ENCODE measurements at regions of chr17 and their contacts with region 1.

Region 1: GRCh38 chr17:31094600-31095238 is at the start of gene NF1:
- DNase-seq: peak; percentile 93
- H3K4me3 ChIP-seq: peak within 1 kb of the TSS; percentile 79 to 99 (median 88)
- H3K27ac ChIP-seq: peak within 1 kb of the TSS; percentile 71
- H3K4me1 ChIP-seq: peaks cover 10% of the 10 kb centered on the region
- H3K27me3 ChIP-seq: no peaks in the 10 kb centered on the region
- CTCF ChIP-seq: no peak
- POLR2A ChIP-seq: peak; percentile 25
- total RNA-seq, gene NF1: 37.6 and 42.4 TPM in 2 replicates

Region 2: GRCh38 chr17:30992551-30992950 is 102.2 kb before region 1 on chr17:
- CTCF ChIA-PET with region 1: no interaction called
- POLR2A ChIA-PET with region 1: no interaction called
- dilution Hi-C with region 1: no loop called
- intact Hi-C with region 1: no loop called
- DNase-seq: no peak
- H3K4me3 ChIP-seq: no peak overlapping the region
- H3K27ac ChIP-seq: no peak overlapping the region
- H3K4me1 ChIP-seq: no peaks in the 10 kb centered on the region
- H3K27me3 ChIP-seq: no peaks in the 10 kb centered on the region
- CTCF ChIP-seq: no peak
- POLR2A ChIP-seq: no peak

Region 3: DNA sequence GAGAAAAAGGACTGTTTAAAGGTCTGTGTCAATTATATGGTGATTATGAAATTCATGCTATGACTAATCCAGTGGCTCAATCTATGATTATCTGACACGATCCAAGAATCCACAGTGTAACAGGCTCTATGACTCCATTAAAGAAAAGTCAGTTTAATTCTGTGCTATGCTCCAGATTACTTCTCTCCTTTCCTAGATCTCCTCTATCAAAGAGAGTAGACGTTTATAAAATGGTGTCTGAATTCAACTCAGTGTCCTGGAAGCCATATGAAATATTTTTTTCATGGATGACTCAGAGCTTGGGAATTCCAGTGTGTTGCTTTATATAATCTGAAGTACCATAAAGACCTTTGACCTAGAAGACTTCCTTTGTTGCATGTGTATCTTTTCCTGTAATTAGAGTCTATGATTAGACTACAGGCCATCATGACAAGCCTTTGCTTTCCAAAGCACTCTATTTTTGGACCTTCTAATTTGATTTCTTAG is 27.0 kb before region 1 on chr17:
- CTCF ChIA-PET with region 1: interaction called, 3 read pairs
- POLR2A ChIA-PET with region 1: no interaction called
- dilution Hi-C with region 1: no loop called
- intact Hi-C with region 1: loop called (anchors 1 kb)
- DNase-seq: peak; percentile 90
- H3K4me3 ChIP-seq: no peak overlapping the region
- H3K27ac ChIP-seq: peak overlapping the region; percentile 63
- H3K4me1 ChIP-seq: peaks cover 16% of the 10 kb centered on the region
- H3K27me3 ChIP-seq: no peaks in the 10 kb centered on the region
- CTCF ChIP-seq: no peak
- POLR2A ChIP-seq: no peak

Region 4: DNA sequence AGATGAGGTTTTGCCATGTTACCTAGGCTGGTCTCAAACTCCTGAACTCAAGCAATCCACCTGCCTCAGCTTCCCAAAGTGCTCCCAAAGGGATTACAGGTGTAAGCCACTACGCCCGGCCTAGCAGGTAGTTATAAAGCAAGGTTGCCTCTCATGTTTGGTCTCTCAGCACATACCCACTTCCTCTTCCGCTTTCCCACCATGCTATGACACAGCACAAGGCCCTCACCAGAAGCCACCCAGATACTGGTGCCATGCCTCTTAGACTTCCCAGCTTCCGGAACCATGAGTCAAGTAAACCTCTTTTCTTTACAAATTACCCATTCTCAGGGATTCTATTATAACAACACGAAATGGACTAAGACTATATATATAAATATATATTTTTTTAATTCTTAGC is 620.7 kb after region 1 on chr17:
- CTCF ChIA-PET with region 1: no interaction called
- POLR2A ChIA-PET with region 1: no interaction called
- dilution Hi-C with region 1: no loop called
- intact Hi-C with region 1: no loop called
- DNase-seq: no peak
- H3K4me3 ChIP-seq: no peak overlapping the region
- H3K27ac ChIP-seq: no peak overlapping the region
- H3K4me1 ChIP-seq: peaks cover 4% of the 10 kb centered on the region
- H3K27me3 ChIP-seq: no peaks in the 10 kb centered on the region
- CTCF ChIP-seq: no peak
- POLR2A ChIP-seq: no peak

Region 5: GRCh38 chr17:31858642-31859473 is 764.1 kb after region 1 on chr17 and contains the start of gene COPRS:
- CTCF ChIA-PET with region 1: no interaction called
- POLR2A ChIA-PET with region 1: no interaction called
- dilution Hi-C with region 1: no loop called
- intact Hi-C with region 1: loop called (anchors 10 kb)
- DNase-seq: peak; percentile 78
- H3K4me3 ChIP-seq: peak within 1 kb of the TSS; percentile 44 to 82 (median 77)
- H3K27ac ChIP-seq: peak within 1 kb of the TSS; percentile 4
- H3K4me1 ChIP-seq: peaks cover 12% of the 10 kb centered on the region
- H3K27me3 ChIP-seq: no peaks in the 10 kb centered on the region
- CTCF ChIP-seq: peak in 1 of 2 donors; percentile 8
- POLR2A ChIP-seq: peak; percentile 67
- total RNA-seq, gene COPRS: 48.0 and 48.8 TPM in 2 replicates

Measured in endothelial cell of umbilical vein (primary cell).